ENCODE measurements at regions of chr10 and their contacts with region 1.

Region 1: DNA sequence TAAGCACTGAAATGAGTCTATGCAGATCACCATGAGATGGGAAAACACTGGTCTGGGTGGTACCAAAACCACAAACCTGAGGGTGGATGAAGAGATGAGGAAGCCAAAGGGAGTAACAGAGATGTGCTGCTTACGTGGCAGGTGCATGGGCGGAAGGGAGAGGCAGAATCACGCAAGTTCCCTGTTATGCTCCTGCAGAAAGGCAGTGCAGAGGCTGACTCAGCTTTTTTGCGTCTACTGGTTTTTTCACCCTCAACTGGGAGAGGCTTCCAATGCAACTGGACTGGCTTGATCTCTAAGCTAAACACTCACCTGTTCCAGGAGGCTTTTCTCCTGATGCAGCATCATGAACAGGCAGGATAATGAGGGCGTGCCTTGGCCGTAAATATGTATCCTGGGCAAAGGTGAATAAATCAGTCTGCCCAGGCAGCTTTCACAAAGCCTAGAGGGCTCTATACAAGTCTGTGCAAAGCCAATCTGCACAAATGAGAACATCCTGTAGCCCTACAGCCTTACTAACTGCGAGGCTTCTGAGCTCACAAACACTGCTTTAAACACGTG is 95.4 kb upstream of the AFAP1L2 start:
- DNase-seq: peak in 8 of 9 donors; percentile 53 to 73 (median 67)
- ATAC-seq: peak; percentile 66
- H3K4me3 ChIP-seq: peak overlapping the region; percentile 2
- H3K4me3 Mint-ChIP-seq: peak overlapping the region; percentile 69 to 79 (median 74)
- H3K27ac ChIP-seq: peak overlapping the region; percentile 78
- H3K27ac Mint-ChIP-seq: peak overlapping the region; percentile 74 to 96 (median 93)
- H3K4me1 ChIP-seq: peaks cover 12 to 81% of the 10 kb centered on the region in 2 donors
- H3K4me1 Mint-ChIP-seq: peaks cover 57 to 100% (median 93%) of the 10 kb centered on the region in 7 donors
- H3K27me3 ChIP-seq: no peaks in the 10 kb centered on the region
- H3K27me3 Mint-ChIP-seq: no peaks in the 10 kb centered on the region

Region 2: DNA sequence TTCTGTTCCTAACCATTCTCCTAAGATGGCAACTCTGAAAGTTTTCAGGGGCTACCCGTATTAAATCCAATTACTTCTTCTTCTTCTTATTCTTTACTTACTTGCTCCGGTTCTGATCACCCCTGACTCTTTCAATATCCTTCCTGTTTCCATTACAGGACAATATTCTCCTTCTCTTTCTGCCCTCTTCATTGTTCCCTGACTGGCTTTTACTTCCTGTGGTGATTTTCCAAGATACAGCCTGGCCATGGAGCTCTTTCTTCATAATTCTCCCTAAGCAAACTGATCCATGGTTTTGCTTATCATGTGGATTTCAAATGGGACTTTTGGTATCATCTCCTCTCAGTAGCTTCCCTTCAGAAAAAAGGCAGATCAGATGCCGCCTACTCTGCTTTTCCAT is 361.1 kb before region 1 on chr10:
- CTCF ChIA-PET with region 1: no interaction called
- POLR2A ChIA-PET with region 1: no interaction called
- intact Hi-C with region 1: no loop called
- DNase-seq: no peak
- ATAC-seq: no peak
- H3K4me3 ChIP-seq: no peak overlapping the region
- H3K4me3 Mint-ChIP-seq: no peak overlapping the region
- H3K27ac ChIP-seq: no peak overlapping the region
- H3K27ac Mint-ChIP-seq: peak overlapping the region in 1 of 9 donors; percentile 9
- H3K4me1 ChIP-seq: no peaks in the 10 kb centered on the region
- H3K4me1 Mint-ChIP-seq: no peaks in the 10 kb centered on the region
- H3K27me3 ChIP-seq: no peaks in the 10 kb centered on the region
- H3K27me3 Mint-ChIP-seq: no peaks in the 10 kb centered on the region

Region 3: GRCh38 chr10:114486938-114487814 is 12.5 kb before region 1 on chr10:
- CTCF ChIA-PET with region 1: no interaction called
- POLR2A ChIA-PET with region 1: interaction called, 7 read pairs
- intact Hi-C with region 1: loop called in 1 of 2 experiments (anchors 1 kb)
- DNase-seq: no peak
- ATAC-seq: no peak
- H3K4me3 ChIP-seq: no peak overlapping the region
- H3K4me3 Mint-ChIP-seq: no peak overlapping the region
- H3K27ac ChIP-seq: peak overlapping the region; percentile 17
- H3K27ac Mint-ChIP-seq: peak overlapping the region in 8 of 9 donors; percentile 10 to 82 (median 70)
- H3K4me1 ChIP-seq: peaks cover under 1 to 17% of the 10 kb centered on the region in 2 donors
- H3K4me1 Mint-ChIP-seq: peaks cover 14 to 90% (median 78%) of the 10 kb centered on the region in 7 donors
- H3K27me3 ChIP-seq: no peaks in the 10 kb centered on the region
- H3K27me3 Mint-ChIP-seq: no peaks in the 10 kb centered on the region

Region 4: DNA sequence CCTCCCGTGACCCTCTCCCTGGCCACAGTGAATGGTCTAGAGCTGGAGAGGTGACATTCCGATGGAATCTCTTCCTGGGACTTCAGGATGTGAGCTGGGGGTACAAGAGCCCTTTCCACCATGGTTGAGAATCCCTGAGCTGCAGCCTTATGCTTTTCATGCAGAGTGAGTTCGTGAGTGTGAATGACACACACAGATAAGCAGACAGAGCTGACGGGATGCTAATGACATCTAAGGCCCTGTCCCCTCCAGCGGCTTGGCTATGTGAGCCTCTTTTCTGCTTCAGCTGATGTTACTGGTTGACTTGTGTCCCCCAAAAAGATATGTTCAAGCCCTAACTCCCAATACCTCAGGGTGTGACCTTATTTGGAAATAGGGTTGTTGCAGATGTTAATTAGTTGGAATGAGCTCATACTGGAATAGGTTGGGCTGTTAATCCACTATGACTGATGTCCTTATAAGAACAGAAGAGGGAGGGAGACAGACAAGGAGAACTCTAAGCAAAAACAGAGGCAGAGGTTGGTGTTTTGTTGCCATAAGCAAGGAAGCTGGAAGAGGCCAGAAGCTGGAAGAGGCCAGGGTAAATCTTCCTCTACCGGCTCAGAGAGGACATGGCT is 15.7 kb after region 1 on chr10:
- CTCF ChIA-PET with region 1: interaction called, 5 read pairs
- POLR2A ChIA-PET with region 1: interaction called, 189 read pairs
- intact Hi-C with region 1: loop called in 1 of 2 experiments (anchors 1 kb)
- DNase-seq: peak in 1 of 9 donors; percentile 36
- ATAC-seq: no peak
- H3K4me3 ChIP-seq: no peak overlapping the region
- H3K4me3 Mint-ChIP-seq: peak overlapping the region in 9 of 10 donors; percentile 72 to 97 (median 89)
- H3K27ac ChIP-seq: peak overlapping the region; percentile 94
- H3K27ac Mint-ChIP-seq: peak overlapping the region in 8 of 9 donors; percentile 74 to 100 (median 97)
- H3K4me1 ChIP-seq: peaks cover 8 to 90% of the 10 kb centered on the region in 2 donors
- H3K4me1 Mint-ChIP-seq: peaks cover 78 to 98% (median 94%) of the 10 kb centered on the region in 7 donors
- H3K27me3 ChIP-seq: no peaks in the 10 kb centered on the region
- H3K27me3 Mint-ChIP-seq: no peaks in the 10 kb centered on the region

Region 5: GRCh38 chr10:114520453-114520852 is 20.7 kb after region 1 on chr10:
- CTCF ChIA-PET with region 1: interaction called, 7 read pairs
- POLR2A ChIA-PET with region 1: interaction called, 189 read pairs
- intact Hi-C with region 1: loop called in 1 of 2 experiments (anchors 1 kb)
- DNase-seq: peak in 4 of 9 donors; percentile 48 to 60 (median 56)
- ATAC-seq: peak; percentile 14
- H3K4me3 ChIP-seq: peak overlapping the region; percentile 25
- H3K4me3 Mint-ChIP-seq: peak overlapping the region; percentile 34 to 97 (median 86)
- H3K27ac ChIP-seq: peak overlapping the region; percentile 94
- H3K27ac Mint-ChIP-seq: peak overlapping the region; percentile 40 to 100 (median 97)
- H3K4me1 ChIP-seq: peaks cover 41 to 77% of the 10 kb centered on the region in 2 donors
- H3K4me1 Mint-ChIP-seq: peaks cover 72 to 95% (median 91%) of the 10 kb centered on the region in 7 donors
- H3K27me3 ChIP-seq: no peaks in the 10 kb centered on the region
- H3K27me3 Mint-ChIP-seq: peaks cover 0 to 3% (median 0%) of the 10 kb centered on the region in 5 donors

Measured in naive thymus-derived CD4-positive, alpha-beta T cell (primary cell).